ENCODE measurements at regions of chr18 and their contacts with region 1.

Region 1: DNA sequence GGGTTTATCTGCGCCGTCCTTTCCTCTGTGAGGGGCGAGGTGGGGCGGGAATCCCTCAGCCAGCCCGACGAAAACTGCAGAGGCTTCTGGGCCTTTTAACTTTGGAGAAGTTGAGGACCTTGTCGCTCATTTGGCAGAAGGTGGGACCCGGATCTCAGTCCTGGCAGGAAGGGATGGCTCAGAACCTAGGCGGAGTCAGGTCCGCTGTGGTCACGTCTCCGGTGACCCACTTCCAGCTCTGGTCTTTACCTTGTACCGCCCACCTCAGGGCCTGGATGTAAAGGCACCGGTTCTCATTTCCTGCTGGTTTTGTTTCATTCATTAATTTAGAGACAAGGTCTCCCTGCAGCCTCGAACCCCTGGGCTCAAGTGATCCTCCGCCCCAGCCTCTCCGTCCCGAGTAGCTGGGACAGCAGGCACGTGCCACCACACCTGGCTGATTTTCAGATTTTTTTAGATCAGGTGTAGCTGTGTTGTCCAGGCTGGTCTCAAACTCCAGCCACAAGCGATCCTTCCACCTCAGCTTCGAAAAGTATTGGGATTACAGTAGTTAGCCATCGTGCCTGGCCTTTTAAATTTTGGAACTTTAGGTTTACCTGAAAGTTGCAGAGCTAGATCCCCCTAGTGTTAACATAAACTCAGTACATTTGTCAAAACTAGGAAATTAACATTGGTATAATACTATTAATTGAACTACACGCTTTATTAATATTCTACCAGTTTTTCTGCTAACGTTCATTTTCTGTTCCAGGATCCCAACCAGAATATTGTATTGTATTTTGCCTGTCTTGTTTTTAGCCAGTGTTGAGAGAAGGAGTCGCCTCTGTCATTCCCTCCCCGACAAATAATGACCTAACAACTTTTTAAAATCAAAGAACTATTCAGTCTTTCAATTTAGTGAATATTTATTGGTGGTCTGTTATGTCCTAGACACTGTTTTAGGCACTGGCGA is 852 bp downstream of the POLI start:
- DNase-seq: peak; percentile 80
- H3K4me3 ChIP-seq: peak overlapping the region; percentile 61 to 82 (median 72)
- H3K27ac ChIP-seq: peak overlapping the region; percentile 81 to 91 (median 88)
- H3K4me1 ChIP-seq: peaks cover 0 to 23% (median 8%) of the 10 kb centered on the region in 4 donors
- H3K27me3 ChIP-seq: no peaks in the 10 kb centered on the region
- CTCF ChIP-seq: peak in 1 of 4 experiments; percentile 19
- EP300 ChIP-seq: no peak
- POLR2A ChIP-seq: no peak

Region 2: GRCh38 chr18:54224379-54225014 is 45.7 kb before region 1 on chr18 and contains the start of gene MBD2:
- intact Hi-C with region 1: loop called (anchors 1 kb)
- DNase-seq: peak; percentile 97
- H3K4me3 ChIP-seq: peak within 1 kb of the TSS; percentile 69 to 90 (median 82)
- H3K27ac ChIP-seq: peak within 1 kb of the TSS; percentile 75 to 88 (median 86)
- H3K4me1 ChIP-seq: peaks cover 0 to 37% (median 29%) of the 10 kb centered on the region in 4 donors
- H3K27me3 ChIP-seq: no peaks in the 10 kb centered on the region
- CTCF ChIP-seq: peak in 1 of 4 experiments; percentile 12
- EP300 ChIP-seq: no peak
- POLR2A ChIP-seq: no peak
- total RNA-seq, gene MBD2: 21.4 to 32.1 (median 24.9) TPM

Region 3: DNA sequence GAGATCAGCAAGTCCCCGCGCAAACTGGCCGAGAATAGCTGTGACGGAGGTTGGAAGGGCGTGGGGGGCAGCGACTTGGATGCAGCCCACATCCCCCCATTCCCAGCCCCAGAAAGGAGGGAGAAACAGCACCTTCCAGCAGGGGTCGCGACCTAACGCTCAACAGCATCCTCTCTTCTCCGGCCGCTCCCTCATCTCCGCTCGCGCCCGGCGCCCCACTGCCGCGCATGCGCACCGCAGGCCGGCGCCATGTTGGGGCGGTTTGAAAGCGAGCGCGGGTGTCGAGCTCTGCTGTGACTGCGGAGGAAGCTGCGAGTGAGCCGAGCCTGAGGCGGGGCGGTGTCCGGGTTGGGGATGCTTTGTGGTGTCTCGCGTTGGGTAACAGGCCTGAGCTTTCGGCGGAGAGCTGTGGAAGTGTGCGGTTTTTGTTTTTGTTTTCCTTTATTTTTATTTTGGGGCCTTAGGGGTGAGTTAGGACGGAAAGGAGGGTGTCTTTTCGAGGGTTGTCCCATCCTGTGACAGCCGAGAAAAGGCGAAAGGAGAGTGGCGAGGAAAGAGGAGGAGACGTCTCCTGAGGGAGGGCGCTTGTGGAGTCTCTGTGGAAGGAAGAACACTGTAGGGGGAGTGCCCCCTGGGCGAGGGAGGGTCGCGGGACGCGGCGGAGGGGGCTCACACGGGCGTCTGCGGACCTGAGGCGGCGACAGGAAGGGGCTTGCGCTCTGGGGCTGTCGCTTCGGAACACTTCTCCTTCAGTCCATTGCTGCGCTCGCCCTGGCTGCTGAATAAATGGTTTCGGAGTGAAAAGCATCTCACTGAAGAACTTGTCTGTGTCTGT is 87.7 kb after region 1 on chr18 and contains the starts of genes C18orf54 and STARD6:
- intact Hi-C with region 1: loop called (anchors 5 kb)
- DNase-seq: peak; percentile 92
- H3K4me3 ChIP-seq: peak within 1 kb of the TSS; percentile 58 to 88 (median 68)
- H3K27ac ChIP-seq: peak within 1 kb of the TSS; percentile 31 to 71 (median 65)
- H3K4me1 ChIP-seq: peaks cover 0 to 10% (median 6%) of the 10 kb centered on the region in 4 donors
- H3K27me3 ChIP-seq: no peaks in the 10 kb centered on the region
- CTCF ChIP-seq: no peak
- EP300 ChIP-seq: no peak
- POLR2A ChIP-seq: no peak
- total RNA-seq, gene C18orf54: 1.3 to 4.1 (median 2.8) TPM
- total RNA-seq, gene STARD6: not detected

Region 4: DNA sequence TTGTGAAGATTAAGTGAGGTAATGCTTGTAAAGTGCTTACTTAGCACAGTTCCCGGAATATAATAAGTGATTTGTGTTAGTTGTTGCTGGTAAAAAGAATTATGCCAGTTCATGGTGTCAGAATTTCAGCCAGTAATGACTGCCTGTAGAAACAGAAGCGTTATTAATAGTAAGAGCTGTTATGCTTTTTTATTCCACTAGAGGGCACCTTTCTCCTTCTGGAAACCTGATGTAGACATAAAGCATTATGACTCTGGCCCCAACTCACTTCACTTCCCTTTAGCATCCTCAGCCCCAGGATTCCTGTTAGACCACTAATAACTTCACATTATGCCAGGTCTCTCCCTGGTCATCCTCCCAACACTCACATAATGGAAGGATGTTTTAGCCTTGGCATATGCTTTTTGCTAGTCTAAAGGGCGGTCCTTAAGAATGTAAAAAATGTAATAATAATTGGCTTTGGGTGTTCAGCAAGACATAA is 122.4 kb after region 1 on chr18:
- intact Hi-C with region 1: no loop called
- DNase-seq: no peak
- H3K4me3 ChIP-seq: no peak overlapping the region
- H3K27ac ChIP-seq: no peak overlapping the region
- H3K4me1 ChIP-seq: peaks cover 0 to 3% (median 0%) of the 10 kb centered on the region in 4 donors
- H3K27me3 ChIP-seq: no peaks in the 10 kb centered on the region
- CTCF ChIP-seq: peak; percentile 14 to 68 (median 48)
- EP300 ChIP-seq: no peak
- POLR2A ChIP-seq: no peak

Measured in sigmoid colon (tissue), 7 donors.